Heart left ventricle (tissue), 16 donors: ENCODE measurements at regions of chr11 and their contacts with region 1.

Region 1: GRCh38 chr11:64284048-64284961 is at the start of gene BAD:
- DNase-seq: peak; percentile 96 to 97 (median 96)
- ATAC-seq: peak; percentile 92 to 97 (median 93)
- H3K4me3 ChIP-seq: peak within 1 kb of the TSS; percentile 40 to 96 (median 78)
- H3K27ac ChIP-seq: peak within 1 kb of the TSS; percentile 94 to 99 (median 98)
- H3K4me1 ChIP-seq: peaks cover 4 to 47% (median 24%) of the 10 kb centered on the region in 12 donors
- H3K27me3 ChIP-seq: no peaks in the 10 kb centered on the region
- CTCF ChIP-seq: no peak
- POLR2A ChIP-seq: peak in 1 of 2 donors; percentile 72
- total RNA-seq, gene BAD: 41.5 to 123 (median 49.9) TPM

Region 2: GRCh38 chr11:64240394-64241174 is 43.7 kb before region 1 on chr11 and contains the start of gene FKBP2:
- intact Hi-C with region 1: loop called in 1 of 10 experiments (anchors 1 kb)
- DNase-seq: peak; percentile 97 to 99 (median 98)
- ATAC-seq: peak; percentile 68 to 78 (median 74)
- H3K4me3 ChIP-seq: peak within 1 kb of the TSS; percentile 65 to 99 (median 80)
- H3K27ac ChIP-seq: peak within 1 kb of the TSS; percentile 95 to 100 (median 99)
- H3K4me1 ChIP-seq: peaks cover 0 to 68% (median 34%) of the 10 kb centered on the region in 12 donors
- H3K27me3 ChIP-seq: no peaks in the 10 kb centered on the region
- CTCF ChIP-seq: no peak
- POLR2A ChIP-seq: peak; percentile 65 to 91
- total RNA-seq, gene FKBP2: 35.0 to 71.5 (median 51.8) TPM